Left cardiac atrium (tissue), 4 donors: ENCODE measurements at regions of chr11 and their contacts with region 1.

Region 1: DNA sequence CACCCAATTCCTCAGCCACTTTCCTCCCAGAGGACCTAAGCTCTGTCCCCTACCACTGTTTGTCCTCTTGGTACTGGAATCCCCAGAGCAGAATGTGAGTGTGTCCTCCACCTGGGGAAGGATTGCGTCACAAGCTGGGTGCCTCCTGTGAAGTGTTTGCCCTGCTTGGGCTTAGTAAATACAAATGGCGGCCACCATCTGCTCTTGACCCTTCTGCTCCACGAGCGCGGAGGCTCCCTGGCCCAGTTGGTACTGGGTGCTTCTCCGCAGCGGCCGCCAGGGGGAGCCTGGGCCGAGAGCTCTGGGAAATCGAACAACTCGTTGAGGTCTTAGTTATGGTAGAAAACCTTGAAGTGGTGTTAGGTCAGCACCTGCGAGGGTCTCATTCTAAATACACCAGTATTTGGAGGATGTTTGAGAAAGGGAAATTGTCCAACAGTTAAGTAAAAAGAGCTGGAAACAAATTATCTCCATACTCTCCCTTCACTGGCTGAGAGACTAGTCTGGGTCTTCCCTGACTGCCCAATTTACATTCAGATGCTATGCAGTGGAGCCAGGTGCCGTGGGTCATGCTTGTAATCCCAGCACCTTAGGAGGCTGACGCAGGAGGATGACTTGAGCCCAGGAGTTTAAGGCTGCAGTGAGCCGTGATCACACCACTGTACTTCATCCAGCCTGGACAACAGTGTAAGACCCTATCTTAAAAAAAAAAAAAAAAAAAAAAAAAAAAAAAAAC is 74.6 kb upstream of the TEAD1 start:
- DNase-seq: peak; percentile 46
- ATAC-seq: peak in 1 of 2 donors; percentile 66

Region 2: GRCh38 chr11:12258451-12258850 is 341.1 kb before region 1 on chr11:
- intact Hi-C with region 1: no loop called
- DNase-seq: peak; percentile 13
- ATAC-seq: peak in 1 of 2 donors; percentile 10

Region 3: DNA sequence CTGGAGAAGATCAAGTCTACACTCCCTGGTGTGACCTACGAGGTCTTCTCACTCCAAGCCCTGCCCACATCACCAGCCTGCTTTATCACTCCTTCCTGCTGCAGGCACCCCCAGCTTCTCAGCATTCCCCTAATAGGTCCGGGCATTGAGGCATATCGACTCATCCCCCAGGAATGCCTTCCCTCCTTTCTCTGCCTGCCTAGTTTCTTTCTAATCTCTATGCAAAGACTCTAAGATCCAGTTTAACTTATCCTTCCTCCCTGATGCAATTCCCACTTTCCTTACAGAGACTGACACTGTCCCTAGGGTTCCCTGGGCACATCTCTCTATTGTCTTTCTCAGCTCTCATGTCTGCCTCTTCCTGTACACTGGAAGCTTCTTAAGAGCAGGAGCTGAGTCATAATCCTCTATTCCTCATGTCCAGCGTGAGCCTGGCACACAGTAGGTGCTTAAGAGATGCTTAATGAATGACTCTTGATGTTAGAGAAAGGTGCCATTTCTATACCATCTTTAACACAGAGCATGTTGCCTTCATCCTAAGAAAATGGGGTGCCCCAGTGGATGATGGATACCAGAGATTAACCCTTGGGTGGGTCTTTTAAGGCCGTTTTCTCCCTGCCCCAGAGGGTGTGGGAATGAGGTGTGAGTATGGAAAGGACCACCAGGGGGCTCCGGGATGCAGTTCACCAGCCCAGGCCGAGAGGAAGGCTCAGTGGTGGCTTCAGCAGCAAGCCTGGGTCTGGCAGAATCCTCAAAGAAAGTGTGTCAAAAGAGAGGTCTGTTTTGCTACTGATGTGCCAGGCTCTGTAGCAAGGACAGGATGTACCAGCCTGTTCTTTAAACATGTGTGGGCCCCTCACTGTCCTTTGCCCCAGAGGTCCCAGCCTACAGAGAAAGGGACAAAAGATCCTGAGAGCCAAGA is 187.5 kb before region 1 on chr11:
- intact Hi-C with region 1: loop called in 1 of 2 experiments (anchors 10 kb)
- DNase-seq: peak; percentile 74
- ATAC-seq: peak; percentile 83 to 85

Region 4: DNA sequence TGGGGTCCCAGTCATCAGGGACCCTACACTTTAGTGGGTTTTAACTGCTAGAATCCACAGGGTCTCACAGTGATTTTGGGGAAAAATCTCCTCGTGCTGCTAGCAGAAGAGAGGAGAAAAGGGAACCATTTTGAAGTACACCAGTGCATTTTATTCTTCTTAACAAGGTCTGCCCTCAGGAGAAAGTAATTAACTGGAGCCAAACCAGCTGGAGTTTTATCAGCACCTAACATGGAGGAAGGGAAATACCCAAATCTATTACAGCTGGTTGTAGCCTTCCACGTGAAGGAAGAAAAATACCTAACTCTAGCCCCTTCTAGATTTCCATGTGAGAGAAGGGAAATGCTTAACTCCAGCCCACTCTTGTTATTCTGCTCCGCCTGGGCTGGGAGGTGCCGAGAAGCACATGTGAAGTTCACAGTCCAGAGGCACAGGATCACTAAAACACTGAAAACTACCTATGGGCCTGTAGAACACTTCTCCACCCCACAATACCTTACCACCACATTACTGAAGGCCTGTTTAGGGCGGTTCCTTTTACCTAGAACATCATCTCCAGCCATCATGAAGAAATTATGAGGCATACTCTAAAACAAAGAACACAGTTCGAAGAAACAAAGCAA is 43.3 kb after region 1 on chr11:
- intact Hi-C with region 1: no loop called
- DNase-seq: no peak
- ATAC-seq: no peak